ENCODE measurements at regions of chr1 and their contacts with region 1.

Region 1: DNA sequence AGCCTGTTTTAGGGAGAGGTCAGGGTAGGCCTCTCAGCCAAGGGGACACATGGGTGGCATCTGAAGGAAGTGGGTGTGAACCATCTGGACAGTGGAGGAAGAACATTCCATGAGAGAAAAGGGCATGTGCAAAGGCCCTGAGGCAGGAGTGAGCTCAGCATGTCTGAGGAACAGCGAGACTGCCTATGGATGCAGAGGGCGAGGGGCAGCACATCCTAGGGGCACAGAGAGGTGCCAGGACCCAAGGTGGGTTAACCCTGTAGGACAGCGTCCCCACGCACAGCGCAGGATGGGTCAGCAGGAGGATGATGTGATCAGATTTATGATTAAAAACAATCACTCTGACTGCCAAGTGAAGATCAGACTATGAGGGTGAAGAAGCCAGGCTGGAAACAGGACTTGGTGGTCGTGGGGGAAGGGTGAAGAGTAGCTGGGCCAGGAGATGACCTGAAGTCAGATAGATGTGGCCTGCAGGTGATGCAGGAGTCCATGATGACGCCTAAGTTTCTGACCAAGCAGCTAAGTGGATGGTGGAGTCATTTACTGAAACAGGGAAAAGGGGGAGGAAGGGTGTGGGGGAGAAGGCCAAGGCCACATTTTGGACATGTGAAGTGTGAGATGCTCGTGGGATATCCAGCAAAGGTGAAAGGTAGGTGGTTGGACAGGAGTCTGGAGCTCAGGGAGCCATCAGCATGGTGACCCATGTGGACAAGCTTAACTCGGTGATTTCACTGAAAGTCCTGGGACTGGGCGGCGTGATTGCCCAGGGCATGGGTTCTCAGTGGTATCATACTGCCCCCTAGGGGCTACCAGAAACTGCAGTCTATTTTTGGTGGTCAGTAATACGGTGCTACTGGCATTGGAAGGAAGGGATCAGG is 37.8 kb downstream of the PABPC4 start:
- DNase-seq: peak; percentile 72
- ATAC-seq: peak; percentile 99
- H3K4me3 Mint-ChIP-seq: no peak overlapping the region
- H3K27ac Mint-ChIP-seq: peak overlapping the region; percentile 13; the same call in 1 of the 2 replicates
- H3K4me1 Mint-ChIP-seq: no peaks in the 10 kb centered on the region
- H3K27me3 Mint-ChIP-seq: no peaks in the 10 kb centered on the region
- CTCF ChIP-seq: peak; percentile 89

Region 2: GRCh38 chr1:39408641-39409054 is 130.2 kb before region 1 on chr1:
- CTCF ChIA-PET with region 1: interaction called, 13 read pairs
- POLR2A ChIA-PET with region 1: no interaction called
- DNase-seq: peak; percentile 93
- ATAC-seq: peak; percentile 90
- H3K4me3 Mint-ChIP-seq: peak overlapping the region; percentile 86
- H3K27ac Mint-ChIP-seq: no peak overlapping the region
- H3K4me1 Mint-ChIP-seq: peaks cover 54% of the 10 kb centered on the region
- H3K27me3 Mint-ChIP-seq: no peaks in the 10 kb centered on the region; the same call in 1 of the 2 replicates
- CTCF ChIP-seq: no peak

Region 3: DNA sequence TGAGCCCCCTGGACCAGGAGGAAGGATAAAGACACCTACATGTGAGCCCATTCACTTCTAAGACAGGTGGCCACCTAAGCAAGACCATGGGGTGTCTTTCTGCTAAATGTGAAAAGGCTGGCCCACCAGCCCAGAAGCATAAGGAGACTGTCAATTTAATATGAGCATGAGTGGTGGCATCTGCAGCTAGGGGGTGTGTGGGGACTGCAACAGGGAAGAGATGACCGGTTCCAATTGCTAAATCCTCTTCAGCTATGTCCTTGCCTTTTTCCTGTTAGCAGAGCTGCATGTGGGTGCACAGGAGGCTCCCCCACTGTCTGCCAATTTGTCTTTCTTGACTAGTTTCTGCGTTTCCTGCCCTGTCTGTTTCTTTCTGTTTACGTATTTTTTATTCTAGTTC is 69.7 kb before region 1 on chr1:
- CTCF ChIA-PET with region 1: interaction called, 31 read pairs
- POLR2A ChIA-PET with region 1: no interaction called
- DNase-seq: no peak
- ATAC-seq: no peak
- H3K4me3 Mint-ChIP-seq: no peak overlapping the region
- H3K27ac Mint-ChIP-seq: no peak overlapping the region
- H3K4me1 Mint-ChIP-seq: no peaks in the 10 kb centered on the region
- H3K27me3 Mint-ChIP-seq: no peaks in the 10 kb centered on the region
- CTCF ChIP-seq: no peak

Region 4: GRCh38 chr1:39491146-39491921 is 47.5 kb before region 1 on chr1 and contains the start of gene BMP8A:
- CTCF ChIA-PET with region 1: interaction called, 38 read pairs
- POLR2A ChIA-PET with region 1: no interaction called
- DNase-seq: peak; percentile 78
- ATAC-seq: peak; percentile 77
- H3K4me3 Mint-ChIP-seq: peak within 1 kb of the TSS; percentile 81
- H3K27ac Mint-ChIP-seq: no peak within 1 kb of the TSS
- H3K4me1 Mint-ChIP-seq: peaks cover 5% of the 10 kb centered on the region
- H3K27me3 Mint-ChIP-seq: peaks cover 51% of the 10 kb centered on the region
- CTCF ChIP-seq: no peak
- total RNA-seq, gene BMP8A: 0.94 to 1.2 TPM (median 1.0 TPM) in 3 replicates

Region 5: DNA sequence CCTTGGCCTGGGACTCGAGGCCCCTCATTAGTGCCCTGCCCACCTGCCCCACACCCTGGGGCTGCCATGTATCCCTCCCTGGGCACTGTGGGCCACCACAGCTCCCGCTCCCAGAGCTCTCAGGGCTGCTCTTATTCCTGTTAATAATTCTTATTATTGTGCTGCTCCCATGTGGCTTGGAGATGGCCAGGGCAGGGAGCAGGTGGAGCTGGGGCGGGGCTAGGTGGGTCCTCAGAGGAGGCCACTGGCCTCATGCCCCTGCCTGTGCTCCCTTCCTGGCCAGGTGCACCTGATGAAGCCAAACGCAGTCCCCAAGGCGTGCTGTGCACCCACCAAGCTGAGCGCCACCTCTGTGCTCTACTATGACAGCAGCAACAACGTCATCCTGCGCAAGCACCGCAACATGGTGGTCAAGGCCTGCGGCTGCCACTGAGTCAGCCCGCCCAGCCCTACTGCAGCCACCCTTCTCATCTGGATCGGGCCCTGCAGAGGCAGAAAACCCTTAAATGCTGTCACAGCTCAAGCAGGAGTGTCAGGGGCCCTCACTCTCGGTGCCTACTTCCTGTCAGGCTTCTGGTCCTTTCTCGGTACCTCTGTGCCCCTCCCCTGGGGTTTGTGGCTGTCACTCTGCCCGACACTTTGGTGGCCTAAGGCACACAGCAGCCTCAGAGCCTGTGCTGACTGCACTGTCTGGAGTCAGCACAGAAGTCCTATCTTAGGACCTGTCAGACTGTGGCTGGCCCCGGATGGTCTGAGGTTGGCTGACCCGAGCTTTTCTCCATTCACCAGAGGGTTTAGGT is 13.3 kb before region 1 on chr1:
- CTCF ChIA-PET with region 1: interaction called, 22 read pairs
- POLR2A ChIA-PET with region 1: no interaction called
- DNase-seq: no peak
- ATAC-seq: no peak
- H3K4me3 Mint-ChIP-seq: no peak overlapping the region
- H3K27ac Mint-ChIP-seq: no peak overlapping the region
- H3K4me1 Mint-ChIP-seq: no peaks in the 10 kb centered on the region
- H3K27me3 Mint-ChIP-seq: peaks cover 3% of the 10 kb centered on the region; the same call in 1 of the 2 replicates
- CTCF ChIP-seq: no peak

Region 6: GRCh38 chr1:39554277-39554676 is 15.4 kb after region 1 on chr1:
- CTCF ChIA-PET with region 1: interaction called, 13 read pairs
- POLR2A ChIA-PET with region 1: no interaction called
- DNase-seq: no peak
- ATAC-seq: no peak
- H3K4me3 Mint-ChIP-seq: no peak overlapping the region
- H3K27ac Mint-ChIP-seq: no peak overlapping the region
- H3K4me1 Mint-ChIP-seq: no peaks in the 10 kb centered on the region
- H3K27me3 Mint-ChIP-seq: no peaks in the 10 kb centered on the region
- CTCF ChIP-seq: no peak

Region 7: GRCh38 chr1:39575191-39576015 is 36.6 kb after region 1 on chr1:
- CTCF ChIA-PET with region 1: interaction called, 13 read pairs
- POLR2A ChIA-PET with region 1: interaction called, 3 read pairs
- DNase-seq: no peak
- ATAC-seq: no peak; the same call in 1 of the 2 replicates
- H3K4me3 Mint-ChIP-seq: peak overlapping the region; percentile 85
- H3K27ac Mint-ChIP-seq: peak overlapping the region; percentile 44
- H3K4me1 Mint-ChIP-seq: peaks cover 27% of the 10 kb centered on the region
- H3K27me3 Mint-ChIP-seq: peaks cover 5% of the 10 kb centered on the region; the same call in 1 of the 2 replicates
- CTCF ChIP-seq: no peak

Region 8: DNA sequence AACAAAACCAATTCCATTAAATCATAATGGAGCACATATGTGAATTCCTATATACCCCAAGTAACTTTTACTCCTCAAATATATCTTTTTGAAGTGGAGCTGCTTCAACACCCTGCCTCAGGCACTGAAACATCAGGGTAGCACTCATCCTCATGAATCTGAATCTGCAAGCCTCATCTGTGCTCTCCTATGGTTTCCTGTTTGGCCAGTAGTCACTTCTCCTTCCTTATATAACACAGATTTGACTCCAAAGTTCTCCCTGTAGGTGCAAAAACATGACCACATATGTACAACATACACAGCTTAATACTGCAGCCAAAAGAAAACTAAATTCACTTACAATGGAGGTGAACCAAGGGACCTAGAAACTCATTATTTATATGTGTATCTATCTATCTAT is 337.3 kb after region 1 on chr1:
- CTCF ChIA-PET with region 1: no interaction called
- POLR2A ChIA-PET with region 1: no interaction called
- DNase-seq: no peak
- ATAC-seq: no peak
- H3K4me3 Mint-ChIP-seq: no peak overlapping the region
- H3K27ac Mint-ChIP-seq: no peak overlapping the region
- H3K4me1 Mint-ChIP-seq: peaks cover 33% of the 10 kb centered on the region
- H3K27me3 Mint-ChIP-seq: no peaks in the 10 kb centered on the region
- CTCF ChIP-seq: no peak